ENCODE measurements at regions of chr12 and their contacts with region 1.

Region 1: DNA sequence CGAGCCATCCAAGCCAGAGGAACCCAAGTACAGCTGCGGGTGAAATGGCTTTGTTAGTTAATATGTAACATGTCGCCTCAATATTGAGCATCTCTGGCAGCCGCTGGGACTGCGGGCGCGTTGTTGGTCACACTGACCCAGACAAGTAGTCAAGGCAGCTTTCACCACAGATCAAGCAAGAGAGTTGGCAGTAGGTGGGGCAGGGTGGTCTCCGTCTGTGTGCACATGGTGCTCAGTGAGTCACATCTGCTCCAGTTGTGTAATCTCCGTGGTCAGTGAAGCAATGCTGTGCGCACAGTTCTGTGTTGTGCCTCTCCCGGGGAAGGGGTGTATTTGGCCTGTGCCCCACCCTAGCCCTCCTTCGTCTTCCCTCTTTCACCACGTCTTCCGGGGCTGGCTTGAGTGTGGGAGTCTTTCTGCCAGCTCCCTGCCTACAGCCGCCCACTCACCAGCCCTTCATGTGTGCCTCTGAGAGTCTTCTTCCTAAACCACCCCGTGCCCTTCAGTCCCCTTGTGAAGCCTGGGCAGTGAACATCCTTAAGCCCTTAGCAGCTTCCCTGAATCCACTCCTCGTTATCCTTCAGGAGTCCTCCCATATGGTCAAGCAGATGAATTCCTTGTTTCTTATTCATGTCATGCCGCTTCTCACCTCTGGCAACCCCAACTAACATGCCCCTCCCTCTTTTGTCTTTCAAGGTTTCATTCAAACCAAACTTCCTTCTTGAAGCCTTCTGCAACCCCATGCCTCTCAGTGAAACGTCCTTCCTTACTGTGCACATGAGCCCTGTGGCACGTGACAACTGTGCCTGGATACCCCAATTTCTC is 242.1 kb downstream of the CACNA1C start:
- DNase-seq: peak; percentile 95 to 99 (median 96)
- H3K4me3 ChIP-seq: peak overlapping the region in 1 of 3 experiments; percentile 56
- H3K4me3 Mint-ChIP-seq: peak overlapping the region; percentile 63 to 84
- H3K27ac ChIP-seq: peak overlapping the region; percentile 97 to 98
- H3K27ac Mint-ChIP-seq: peak overlapping the region; percentile 97 to 100 (median 100)
- H3K4me1 ChIP-seq: peaks cover 60 to 66% of the 10 kb centered on the region in 2 donors
- H3K4me1 Mint-ChIP-seq: peaks cover 71% of the 10 kb centered on the region
- H3K27me3 ChIP-seq: no peaks in the 10 kb centered on the region
- H3K27me3 Mint-ChIP-seq: peaks cover 0 to 1% (median 0%) of the 10 kb centered on the region in 3 donors
- CTCF ChIP-seq: no peak

Region 2: GRCh38 chr12:2064071-2064507 is 230.8 kb before region 1 on chr12:
- intact Hi-C with region 1: no loop called
- DNase-seq: no peak
- H3K4me3 ChIP-seq: peak overlapping the region in 1 of 3 experiments; percentile 40
- H3K4me3 Mint-ChIP-seq: peak overlapping the region; percentile 50 to 84
- H3K27ac ChIP-seq: no peak overlapping the region
- H3K27ac Mint-ChIP-seq: peak overlapping the region in 2 of 7 donors; percentile 10 to 66
- H3K4me1 ChIP-seq: peaks cover 8 to 11% of the 10 kb centered on the region in 2 donors
- H3K4me1 Mint-ChIP-seq: peaks cover 11% of the 10 kb centered on the region
- H3K27me3 ChIP-seq: peaks cover 0 to 2% of the 10 kb centered on the region in 2 donors
- H3K27me3 Mint-ChIP-seq: peaks cover 3 to 15% (median 5%) of the 10 kb centered on the region in 3 donors
- CTCF ChIP-seq: no peak

Region 3: GRCh38 chr12:2336409-2336829 is 41.6 kb after region 1 on chr12:
- intact Hi-C with region 1: loop called (anchors 1 to 5 kb)
- DNase-seq: peak; percentile 81 to 94 (median 93)
- H3K4me3 ChIP-seq: peak overlapping the region in 1 of 3 experiments; percentile 53
- H3K4me3 Mint-ChIP-seq: peak overlapping the region; percentile 42 to 68
- H3K27ac ChIP-seq: peak overlapping the region; percentile 93 to 97
- H3K27ac Mint-ChIP-seq: peak overlapping the region; percentile 91 to 98 (median 97)
- H3K4me1 ChIP-seq: peaks cover 78 to 81% of the 10 kb centered on the region in 2 donors
- H3K4me1 Mint-ChIP-seq: peaks cover 74% of the 10 kb centered on the region
- H3K27me3 ChIP-seq: no peaks in the 10 kb centered on the region
- H3K27me3 Mint-ChIP-seq: peaks cover 0 to 2% (median 0%) of the 10 kb centered on the region in 3 donors
- CTCF ChIP-seq: no peak

Measured in CD14-positive monocyte (primary cell).